ENCODE measurements at regions of chr10 and their contacts with region 1.

Region 1: DNA sequence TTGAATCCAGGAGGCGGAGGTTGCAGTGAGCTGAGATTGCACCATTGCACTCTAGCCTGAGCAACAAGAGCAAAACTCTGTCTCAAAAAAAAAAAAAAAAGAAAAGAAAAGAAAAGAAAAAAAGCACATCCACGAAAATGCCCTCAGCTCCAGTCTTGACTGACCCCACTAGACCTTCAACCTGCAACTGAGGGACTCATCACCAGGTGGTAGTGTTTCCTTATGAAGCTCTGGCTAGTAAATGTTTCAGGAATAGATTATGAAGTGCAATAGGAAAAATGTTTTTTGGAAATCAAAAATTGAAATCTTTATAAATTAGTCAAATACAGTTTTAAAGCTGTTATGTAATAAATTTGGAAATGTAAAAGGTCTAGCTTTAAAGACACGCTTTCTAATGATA is 22.4 kb downstream of the TLL2 start:
- DNase-seq: no peak
- ATAC-seq: no peak
- H3K4me3 ChIP-seq: no peak overlapping the region
- H3K27ac ChIP-seq: no peak overlapping the region
- H3K4me1 ChIP-seq: no peaks in the 10 kb centered on the region
- H3K27me3 ChIP-seq: peaks cover 2% of the 10 kb centered on the region
- CTCF ChIP-seq: 0 out of 2 replicates have a peak, but pooled peaks have one; percentile 9
- POLR2A ChIP-seq: no peak
- RAD21 ChIP-seq: peak; percentile 27

Region 2: DNA sequence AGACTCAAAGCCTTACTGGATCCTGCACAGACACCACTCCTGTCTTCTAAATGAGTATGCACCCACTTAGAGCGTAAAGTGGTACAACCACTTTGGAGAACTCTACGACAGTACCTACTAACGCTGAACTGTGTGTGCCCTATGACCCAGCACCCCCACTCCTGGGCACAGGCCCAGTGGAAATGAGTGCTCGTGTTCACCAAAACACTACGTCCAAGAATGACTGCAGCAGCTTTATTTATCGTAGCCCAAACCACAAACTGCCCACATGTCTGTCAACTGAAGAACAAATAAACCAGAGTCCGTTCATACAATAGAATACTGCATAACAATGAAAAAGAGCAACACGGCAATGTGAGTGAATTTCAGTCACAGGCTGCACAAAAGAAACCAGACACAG is 13.0 kb before region 1 on chr10:
- CTCF ChIA-PET with region 1: no interaction called
- POLR2A ChIA-PET with region 1: interaction called, 13 read pairs
- dilution Hi-C with region 1: no loop called
- in situ Hi-C with region 1: no loop called
- intact Hi-C with region 1: no loop called
- DNase-seq: no peak
- ATAC-seq: no peak
- H3K4me3 ChIP-seq: no peak overlapping the region
- H3K27ac ChIP-seq: no peak overlapping the region
- H3K4me1 ChIP-seq: no peaks in the 10 kb centered on the region
- H3K27me3 ChIP-seq: peaks cover 4% of the 10 kb centered on the region; the same call in 1 of the 2 replicates
- CTCF ChIP-seq: no peak
- POLR2A ChIP-seq: no peak
- RAD21 ChIP-seq: no peak

Region 3: GRCh38 chr10:96967847-96968246 is 476.5 kb after region 1 on chr10:
- CTCF ChIA-PET with region 1: no interaction called
- POLR2A ChIA-PET with region 1: no interaction called
- dilution Hi-C with region 1: no loop called
- in situ Hi-C with region 1: no loop called
- intact Hi-C with region 1: no loop called
- DNase-seq: peak; percentile 54
- ATAC-seq: peak; percentile 83
- H3K4me3 ChIP-seq: no peak overlapping the region
- H3K27ac ChIP-seq: no peak overlapping the region
- H3K4me1 ChIP-seq: peaks cover 7% of the 10 kb centered on the region
- H3K27me3 ChIP-seq: no peaks in the 10 kb centered on the region
- CTCF ChIP-seq: no peak
- POLR2A ChIP-seq: no peak
- RAD21 ChIP-seq: no peak

Measured in IMR-90 (cell line).